ENCODE measurements at regions of chr2 and their contacts with region 1.

Region 1: GRCh38 chr2:241926541-241927311 is 57.2 kb downstream of the RTP5 start:
- DNase-seq: no peak
- ATAC-seq: no peak
- H3K4me3 Mint-ChIP-seq: no peak overlapping the region
- H3K27ac Mint-ChIP-seq: no peak overlapping the region
- H3K4me1 Mint-ChIP-seq: peaks cover 19% of the 10 kb centered on the region
- H3K27me3 Mint-ChIP-seq: no peaks in the 10 kb centered on the region

Region 2: GRCh38 chr2:241750076-241750840 is 176.5 kb before region 1 on chr2:
- CTCF ChIA-PET with region 1: no interaction called
- POLR2A ChIA-PET with region 1: interaction called, 11 read pairs
- intact Hi-C with region 1: no loop called
- DNase-seq: no peak
- ATAC-seq: no peak
- H3K4me3 Mint-ChIP-seq: no peak overlapping the region
- H3K27ac Mint-ChIP-seq: no peak overlapping the region
- H3K4me1 Mint-ChIP-seq: no peaks in the 10 kb centered on the region
- H3K27me3 Mint-ChIP-seq: no peaks in the 10 kb centered on the region

Region 3: GRCh38 chr2:241882091-241882625 is 44.6 kb before region 1 on chr2:
- CTCF ChIA-PET with region 1: no interaction called
- POLR2A ChIA-PET with region 1: no interaction called
- intact Hi-C with region 1: no loop called
- DNase-seq: peak; percentile 86
- ATAC-seq: peak; percentile 43
- H3K4me3 Mint-ChIP-seq: peak overlapping the region; percentile 82
- H3K27ac Mint-ChIP-seq: peak overlapping the region; percentile 80
- H3K4me1 Mint-ChIP-seq: peaks cover 37% of the 10 kb centered on the region
- H3K27me3 Mint-ChIP-seq: no peaks in the 10 kb centered on the region

Region 4: GRCh38 chr2:242020196-242021004 is 93.7 kb after region 1 on chr2:
- CTCF ChIA-PET with region 1: no interaction called
- POLR2A ChIA-PET with region 1: no interaction called
- intact Hi-C with region 1: no loop called
- DNase-seq: no peak
- ATAC-seq: no peak
- H3K4me3 Mint-ChIP-seq: no peak overlapping the region
- H3K27ac Mint-ChIP-seq: no peak overlapping the region
- H3K4me1 Mint-ChIP-seq: no peaks in the 10 kb centered on the region
- H3K27me3 Mint-ChIP-seq: no peaks in the 10 kb centered on the region